GM12878 (cell line): ENCODE measurements at regions of chr15 and their contacts with region 1.

Region 1: GRCh38 chr15:41774062-41774881 is at the start of gene MAPKBP1:
- DNase-seq: peak; percentile 96
- ATAC-seq: peak; percentile 87
- H3K4me3 ChIP-seq: peak within 1 kb of the TSS; percentile 92
- H3K27ac ChIP-seq: peak within 1 kb of the TSS; percentile 77
- H3K4me1 ChIP-seq: peaks cover 12% of the 10 kb centered on the region
- H3K27me3 ChIP-seq: no peaks in the 10 kb centered on the region
- CTCF ChIP-seq: peak; percentile 85 to 98 (median 87)
- EP300 ChIP-seq: no peak; a peak in 1 of 4 replicates
- POLR2A ChIP-seq: peak; percentile 87
- RAD21 ChIP-seq: peak; percentile 53
- polyA plus RNA-seq, gene MAPKBP1: 0.44 to 0.50 TPM

Region 2: GRCh38 chr15:41139619-41140018 is 634.7 kb before region 1 on chr15:
- CTCF ChIA-PET with region 1: no interaction called
- POLR2A ChIA-PET with region 1: no interaction called
- RAD21 ChIA-PET with region 1: no interaction called
- SMC1A ChIA-PET with region 1: no interaction called
- in situ Hi-C with region 1: no loop called
- intact Hi-C with region 1: no loop called
- DNase-seq: no peak
- ATAC-seq: no peak
- H3K4me3 ChIP-seq: no peak overlapping the region
- H3K27ac ChIP-seq: no peak overlapping the region
- H3K4me1 ChIP-seq: no peaks in the 10 kb centered on the region
- H3K27me3 ChIP-seq: no peaks in the 10 kb centered on the region
- CTCF ChIP-seq: no peak
- EP300 ChIP-seq: no peak
- POLR2A ChIP-seq: no peak
- RAD21 ChIP-seq: no peak

Region 3: GRCh38 chr15:41465822-41466421 is 308.4 kb before region 1 on chr15:
- CTCF ChIA-PET with region 1: interaction called, 33 read pairs
- POLR2A ChIA-PET with region 1: no interaction called
- RAD21 ChIA-PET with region 1: interaction called, 18 read pairs
- SMC1A ChIA-PET with region 1: interaction called, 10 read pairs
- in situ Hi-C with region 1: no loop called
- intact Hi-C with region 1: no loop called
- DNase-seq: no peak
- ATAC-seq: peak; percentile 65
- H3K4me3 ChIP-seq: no peak overlapping the region
- H3K27ac ChIP-seq: no peak overlapping the region
- H3K4me1 ChIP-seq: no peaks in the 10 kb centered on the region
- H3K27me3 ChIP-seq: no peaks in the 10 kb centered on the region
- CTCF ChIP-seq: peak; percentile 96 to 99 (median 99)
- EP300 ChIP-seq: no peak
- POLR2A ChIP-seq: no peak
- RAD21 ChIP-seq: peak; percentile 96

Region 4: DNA sequence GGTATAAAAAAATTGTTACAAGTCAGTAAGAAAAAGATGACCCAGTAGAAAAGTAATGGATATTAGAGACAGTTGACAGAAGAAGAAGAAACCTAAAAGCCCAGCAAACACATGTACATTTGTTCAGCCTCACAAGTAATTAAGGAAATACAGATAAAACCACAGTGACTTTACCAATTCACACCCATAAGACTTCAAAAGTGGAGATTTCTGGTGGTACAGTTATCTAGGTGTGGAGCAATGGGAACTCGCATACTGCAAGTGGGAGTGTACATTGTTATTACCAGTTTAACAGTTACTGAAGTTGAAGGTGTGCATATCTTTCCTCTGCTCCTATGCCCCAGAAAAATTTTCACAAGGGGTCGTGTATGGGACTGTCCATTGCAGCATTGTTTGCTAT is 18.1 kb before region 1 on chr15:
- CTCF ChIA-PET with region 1: interaction called, 17 read pairs
- POLR2A ChIA-PET with region 1: interaction called, 3 read pairs
- RAD21 ChIA-PET with region 1: interaction called, 4 read pairs
- SMC1A ChIA-PET with region 1: interaction called, 12 read pairs
- in situ Hi-C with region 1: no loop called
- intact Hi-C with region 1: no loop called
- DNase-seq: no peak
- ATAC-seq: no peak
- H3K4me3 ChIP-seq: no peak overlapping the region
- H3K27ac ChIP-seq: no peak overlapping the region
- H3K4me1 ChIP-seq: no peaks in the 10 kb centered on the region
- H3K27me3 ChIP-seq: no peaks in the 10 kb centered on the region
- CTCF ChIP-seq: no peak
- EP300 ChIP-seq: no peak
- POLR2A ChIP-seq: no peak
- RAD21 ChIP-seq: no peak

Region 5: GRCh38 chr15:41806291-41807181 is 32.3 kb after region 1 on chr15:
- CTCF ChIA-PET with region 1: interaction called, 365 read pairs
- POLR2A ChIA-PET with region 1: interaction called, 32 read pairs
- RAD21 ChIA-PET with region 1: interaction called, 305 read pairs
- SMC1A ChIA-PET with region 1: interaction called, 268 read pairs
- in situ Hi-C with region 1: loop called (anchors 5 kb)
- intact Hi-C with region 1: loop called (anchors 1 kb)
- DNase-seq: no peak
- ATAC-seq: peak; percentile 40; the same call in 1 of the 3 replicates
- H3K4me3 ChIP-seq: no peak overlapping the region
- H3K27ac ChIP-seq: no peak overlapping the region
- H3K4me1 ChIP-seq: no peaks in the 10 kb centered on the region
- H3K27me3 ChIP-seq: no peaks in the 10 kb centered on the region
- CTCF ChIP-seq: peak in 2 of 3 experiments; percentile 7 to 17; a peak in 2 of 6 replicates
- EP300 ChIP-seq: no peak
- POLR2A ChIP-seq: no peak
- RAD21 ChIP-seq: no peak

Region 6: DNA sequence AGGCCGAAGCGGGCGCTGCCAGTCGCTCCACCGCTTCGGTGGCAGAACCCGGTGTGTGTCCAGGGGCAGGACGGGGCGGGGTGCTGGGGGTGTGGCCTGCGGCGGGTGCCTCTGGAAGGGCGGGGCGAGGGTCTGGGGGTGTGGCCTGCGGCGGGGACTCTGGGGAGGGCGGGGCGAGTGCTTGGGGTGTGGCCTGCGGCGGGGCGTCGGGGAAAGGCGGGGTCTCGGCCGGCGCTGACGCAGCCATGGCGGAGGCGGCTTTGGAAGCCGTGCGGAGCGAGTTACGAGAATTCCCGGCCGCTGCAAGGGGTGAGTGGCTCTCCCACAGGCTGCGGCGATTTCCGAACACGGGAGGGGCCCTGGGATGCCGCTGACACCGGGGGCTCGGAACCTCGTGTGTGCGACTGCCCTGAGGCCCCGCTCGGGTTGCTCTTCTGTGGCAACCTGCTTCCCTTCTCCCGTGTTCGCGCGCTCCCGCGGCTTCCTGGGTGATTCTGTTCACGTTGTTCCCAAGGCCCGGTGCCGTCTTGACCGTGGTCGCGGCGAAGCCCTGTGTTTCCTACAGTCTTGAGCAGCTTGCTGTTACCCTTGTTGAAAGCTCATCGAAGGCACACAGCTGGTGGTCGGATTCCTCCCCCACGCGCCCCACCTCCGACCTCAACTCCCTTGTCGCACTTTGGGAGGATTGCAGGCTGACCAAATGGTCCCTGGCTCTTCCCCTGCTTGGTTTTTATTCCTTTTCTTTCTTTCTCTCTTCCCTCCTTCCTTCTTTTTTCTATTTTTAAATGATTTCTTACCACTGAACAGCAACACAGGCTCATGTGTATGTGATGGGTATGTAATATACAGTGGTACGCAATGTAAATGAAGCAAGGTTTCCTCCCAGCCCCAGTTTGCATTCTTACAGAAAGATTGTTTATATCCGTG is 53.9 kb after region 1 on chr15 and contains the start of gene JMJD7:
- CTCF ChIA-PET with region 1: interaction called, 12 read pairs
- POLR2A ChIA-PET with region 1: interaction called, 3 read pairs
- RAD21 ChIA-PET with region 1: interaction called, 5 read pairs
- SMC1A ChIA-PET with region 1: interaction called, 7 read pairs
- in situ Hi-C with region 1: no loop called
- intact Hi-C with region 1: no loop called
- DNase-seq: peak; percentile 44
- ATAC-seq: peak; percentile 96
- H3K4me3 ChIP-seq: peak within 1 kb of the TSS; percentile 85
- H3K27ac ChIP-seq: 0 out of 2 replicates have a peak within 1 kb of the TSS, but pooled peaks have one; percentile 10
- H3K4me1 ChIP-seq: no peaks in the 10 kb centered on the region
- H3K27me3 ChIP-seq: no peaks in the 10 kb centered on the region
- CTCF ChIP-seq: no peak
- EP300 ChIP-seq: no peak
- POLR2A ChIP-seq: peak; percentile 84
- RAD21 ChIP-seq: no peak
- polyA plus RNA-seq, gene JMJD7: 0.79 to 2.2 TPM

Region 7: DNA sequence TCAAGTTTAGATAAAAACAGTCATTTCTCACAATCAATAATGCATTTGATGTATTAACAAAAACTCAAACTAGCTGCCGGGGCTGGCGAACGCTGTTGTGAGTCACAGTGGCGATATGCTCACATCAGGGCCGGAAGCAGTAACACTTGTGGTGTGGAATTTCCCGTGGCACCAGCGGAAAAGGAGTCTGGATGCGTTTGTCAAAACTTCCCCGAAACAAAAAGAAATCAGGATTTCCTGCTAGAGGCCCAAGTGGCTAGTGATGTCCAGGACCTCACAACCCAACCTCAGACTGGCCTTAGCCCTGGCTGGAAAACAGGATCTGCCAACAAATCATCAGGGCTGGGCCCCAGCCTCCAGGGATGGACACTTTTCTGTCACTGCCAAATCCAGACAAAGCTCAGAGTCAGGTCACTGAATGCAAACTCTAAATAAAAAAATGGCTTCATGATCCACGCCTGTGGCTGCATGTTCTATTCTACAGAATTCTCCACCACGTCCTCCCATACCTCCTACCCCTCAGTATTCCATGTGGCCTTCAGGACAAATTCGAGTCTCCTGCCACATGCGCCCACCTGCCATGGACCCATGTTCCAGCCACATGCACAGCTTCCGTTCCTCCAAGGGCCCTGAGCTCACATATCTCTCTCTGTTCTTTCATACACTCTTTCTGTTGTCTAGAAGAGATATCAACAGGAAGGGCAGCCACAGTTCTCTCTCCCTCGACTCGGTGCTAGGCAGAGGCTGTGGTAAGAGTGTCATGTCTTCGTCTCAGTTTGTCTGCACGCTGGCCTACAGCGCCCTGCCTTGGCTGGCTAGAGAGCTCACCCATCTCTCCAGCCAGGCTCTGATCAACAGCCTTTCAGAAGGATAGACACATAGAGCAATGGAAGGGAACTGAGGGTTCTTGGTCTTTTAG is 162.6 kb after region 1 on chr15:
- CTCF ChIA-PET with region 1: interaction called, 16 read pairs
- POLR2A ChIA-PET with region 1: interaction called, 3 read pairs
- RAD21 ChIA-PET with region 1: interaction called, 3 read pairs
- SMC1A ChIA-PET with region 1: no interaction called
- in situ Hi-C with region 1: no loop called
- intact Hi-C with region 1: no loop called
- DNase-seq: no peak
- ATAC-seq: peak; percentile 10; the same call in 1 of the 3 replicates
- H3K4me3 ChIP-seq: no peak overlapping the region
- H3K27ac ChIP-seq: peak overlapping the region; percentile 45
- H3K4me1 ChIP-seq: peaks cover 34% of the 10 kb centered on the region
- H3K27me3 ChIP-seq: no peaks in the 10 kb centered on the region
- CTCF ChIP-seq: peak; percentile 6 to 31 (median 29); a peak in 4 of 6 replicates
- EP300 ChIP-seq: no peak
- POLR2A ChIP-seq: peak; percentile 48; the same call in 1 of the 2 replicates
- RAD21 ChIP-seq: peak; percentile 30